ENCODE measurements at regions of chr15 and their contacts with region 1.

Region 1: GRCh38 chr15:74382004-74382816 is 14.8 kb upstream of the CYP11A1 start:
- DNase-seq: peak; percentile 88 to 89 (median 89)
- ATAC-seq: peak; percentile 95 to 99 (median 98)
- H3K4me3 ChIP-seq: no peak overlapping the region
- H3K27ac ChIP-seq: no peak overlapping the region
- H3K4me1 ChIP-seq: no peaks in the 10 kb centered on the region
- H3K27me3 ChIP-seq: no peaks in the 10 kb centered on the region
- CTCF ChIP-seq: peak; percentile 93 to 99 (median 96)
- POLR2A ChIP-seq: no peak

Region 2: DNA sequence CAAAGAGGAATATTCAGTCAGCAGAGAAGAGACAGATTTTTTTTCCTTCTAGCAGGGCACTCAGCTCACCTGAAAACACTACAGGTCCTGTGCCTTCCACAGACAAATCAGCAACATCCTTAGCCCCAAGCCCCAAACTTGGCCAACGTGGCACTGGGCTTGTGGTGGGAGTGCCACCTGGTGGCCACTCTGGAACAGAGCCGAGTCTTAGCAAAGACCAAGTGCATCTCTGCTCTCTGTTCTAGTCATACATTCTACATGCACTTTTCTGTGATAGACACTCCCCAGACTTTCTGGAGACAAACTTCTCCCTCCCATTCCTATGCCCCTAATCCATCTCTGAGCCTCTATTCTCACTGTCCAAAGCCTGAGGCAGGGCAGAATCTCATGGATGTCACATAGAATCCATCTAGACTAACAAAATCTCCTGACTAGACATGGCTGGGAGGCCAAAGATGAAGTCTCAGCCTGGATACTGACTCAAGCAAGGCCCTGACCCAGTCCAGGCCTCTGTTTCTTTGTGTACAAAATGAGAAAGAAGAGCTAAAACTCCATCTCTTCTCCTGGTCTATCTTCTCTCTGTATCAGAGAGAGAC is 56.6 kb after region 1 on chr15:
- intact Hi-C with region 1: loop called (anchors 5 kb)
- DNase-seq: peak; percentile 68 to 75 (median 73)
- ATAC-seq: peak; percentile 69 to 77 (median 72)
- H3K4me3 ChIP-seq: no peak overlapping the region
- H3K27ac ChIP-seq: no peak overlapping the region
- H3K4me1 ChIP-seq: peaks cover 0 to 23% (median 10%) of the 10 kb centered on the region in 4 donors
- H3K27me3 ChIP-seq: no peaks in the 10 kb centered on the region
- CTCF ChIP-seq: peak; percentile 82 to 95 (median 93)
- POLR2A ChIP-seq: no peak

Region 3: DNA sequence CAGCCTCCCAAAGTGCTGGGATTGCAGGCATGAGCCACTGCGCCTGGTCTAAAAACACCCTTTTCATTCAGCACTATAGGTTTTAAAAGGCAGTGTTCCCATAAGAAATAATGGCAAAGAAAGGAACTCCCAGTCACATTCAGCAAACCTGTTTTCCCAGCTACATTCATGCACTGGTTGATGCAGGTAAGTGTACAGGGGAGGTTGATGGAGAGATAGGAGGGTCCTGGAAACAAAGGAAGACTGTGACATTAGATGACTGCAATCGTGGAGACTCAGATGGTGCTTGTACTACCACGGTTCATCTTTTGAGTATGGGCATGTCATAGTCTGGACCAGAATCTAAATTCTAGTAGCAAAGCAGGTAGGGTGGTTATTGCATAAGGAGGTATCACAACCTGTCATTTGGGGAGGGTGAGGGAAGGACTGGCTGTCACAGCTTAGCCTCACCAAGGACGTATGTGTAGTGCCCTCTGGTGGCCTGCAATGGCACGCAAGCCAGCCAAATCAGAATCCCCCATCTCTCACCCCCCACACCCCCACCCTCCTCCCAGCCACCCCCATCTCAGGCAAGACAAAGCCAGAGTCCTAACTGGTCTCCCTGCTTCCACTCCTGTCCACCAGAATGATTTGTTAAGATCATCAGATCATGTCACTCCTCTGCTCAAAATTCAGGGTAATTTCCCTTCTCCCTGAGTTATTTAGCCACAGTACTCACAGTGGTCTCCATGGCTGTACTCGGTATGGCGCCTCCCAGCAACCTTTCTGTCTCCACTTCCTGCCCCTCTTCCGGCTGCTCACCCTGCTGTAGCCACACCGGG is 107.5 kb after region 1 on chr15:
- intact Hi-C with region 1: loop called (anchors 5 to 10 kb)
- DNase-seq: peak; percentile 46 to 59 (median 54)
- ATAC-seq: peak; percentile 87 to 91 (median 90)
- H3K4me3 ChIP-seq: no peak overlapping the region
- H3K27ac ChIP-seq: no peak overlapping the region
- H3K4me1 ChIP-seq: no peaks in the 10 kb centered on the region
- H3K27me3 ChIP-seq: no peaks in the 10 kb centered on the region
- CTCF ChIP-seq: peak; percentile 31 to 70 (median 64)
- POLR2A ChIP-seq: no peak

Measured in right lobe of liver (tissue), 6 donors.